Transverse colon (tissue), 4 donors: ENCODE measurements at regions of chr2 and their contacts with region 1.

Region 1: GRCh38 chr2:131413148-131413747 is 49.3 kb upstream of the RAB6D start:
- DNase-seq: no peak
- H3K4me3 ChIP-seq: no peak overlapping the region
- H3K27ac ChIP-seq: no peak overlapping the region
- H3K4me1 ChIP-seq: no peaks in the 10 kb centered on the region
- H3K27me3 ChIP-seq: peaks cover 32% of the 10 kb centered on the region
- CTCF ChIP-seq: peak; percentile 70 to 80 (median 75)
- EP300 ChIP-seq: no peak
- POLR2A ChIP-seq: no peak

Region 2: DNA sequence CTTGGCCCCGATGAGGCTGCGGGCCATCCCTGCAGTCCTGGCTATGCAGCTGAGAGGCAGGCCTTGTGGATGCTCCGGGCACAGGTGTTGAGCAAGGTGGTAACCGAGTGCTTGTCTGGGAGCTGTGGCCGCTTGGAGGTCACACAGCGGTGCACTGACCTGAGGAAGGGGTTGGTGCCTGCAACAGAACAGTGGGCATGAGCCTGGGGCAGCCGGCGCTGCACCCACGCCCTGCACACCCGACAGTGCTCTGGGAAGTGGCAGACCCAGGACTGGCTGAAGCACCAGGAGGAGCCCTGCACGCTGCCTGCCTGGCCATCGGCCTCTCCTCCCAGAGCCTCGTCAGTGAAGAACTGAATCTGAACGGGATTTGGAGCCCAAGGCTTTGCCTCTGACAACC is 212.2 kb before region 1 on chr2:
- in situ Hi-C with region 1: no loop called
- intact Hi-C with region 1: no loop called
- DNase-seq: no peak
- H3K4me3 ChIP-seq: no peak overlapping the region
- H3K27ac ChIP-seq: no peak overlapping the region
- H3K4me1 ChIP-seq: no peaks in the 10 kb centered on the region
- H3K27me3 ChIP-seq: no peaks in the 10 kb centered on the region
- CTCF ChIP-seq: no peak
- EP300 ChIP-seq: no peak
- POLR2A ChIP-seq: no peak

Region 3: GRCh38 chr2:131349021-131349420 is 64.2 kb before region 1 on chr2:
- in situ Hi-C with region 1: no loop called
- intact Hi-C with region 1: no loop called
- DNase-seq: no peak
- H3K4me3 ChIP-seq: no peak overlapping the region
- H3K27ac ChIP-seq: no peak overlapping the region
- H3K4me1 ChIP-seq: no peaks in the 10 kb centered on the region
- H3K27me3 ChIP-seq: no peaks in the 10 kb centered on the region
- CTCF ChIP-seq: no peak
- EP300 ChIP-seq: no peak
- POLR2A ChIP-seq: no peak

Region 4: DNA sequence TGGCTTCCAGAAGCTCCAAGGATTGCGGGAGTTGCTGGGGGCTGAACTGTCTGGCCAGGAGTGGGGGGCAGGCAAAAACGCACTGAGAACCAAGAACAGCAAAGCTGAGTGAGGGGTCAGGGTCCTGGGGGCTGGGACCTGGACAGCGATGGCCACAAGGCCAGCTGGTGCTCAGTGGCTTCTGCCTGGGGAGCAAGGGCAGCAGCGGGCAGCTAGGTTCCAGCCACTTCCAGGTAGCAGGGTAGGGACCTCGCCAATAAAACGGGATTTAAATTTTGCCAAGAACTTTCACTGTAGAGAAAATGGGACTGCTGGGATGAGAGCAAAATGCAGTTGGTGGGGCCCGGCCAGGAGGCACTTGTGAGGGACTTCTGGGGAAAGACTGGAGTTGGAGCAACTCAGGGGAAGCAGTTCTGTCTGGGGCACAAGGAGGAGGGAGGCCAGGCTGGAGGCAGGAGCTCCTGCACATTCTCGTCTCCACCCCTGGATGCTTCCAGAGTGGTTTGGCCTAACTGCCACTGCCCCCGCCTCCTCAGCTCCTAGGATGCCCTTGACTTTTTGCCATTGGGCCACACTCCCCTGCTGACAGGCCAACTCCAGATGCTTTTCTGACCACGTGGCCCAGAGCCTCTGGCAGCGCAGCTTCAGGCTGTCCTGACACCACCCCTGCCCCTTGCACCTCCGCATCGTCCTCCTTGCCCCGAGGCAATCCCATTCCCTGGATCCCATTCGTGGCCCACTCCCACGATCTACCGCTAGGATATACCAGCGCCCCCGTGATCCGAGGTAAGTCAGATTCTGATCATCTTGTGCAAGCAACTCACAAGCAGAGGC is 108.9 kb after region 1 on chr2:
- in situ Hi-C with region 1: no loop called
- intact Hi-C with region 1: loop called (anchors 10 kb)
- DNase-seq: no peak
- H3K4me3 ChIP-seq: no peak overlapping the region
- H3K27ac ChIP-seq: no peak overlapping the region
- H3K4me1 ChIP-seq: peaks cover 0 to 2% (median 1%) of the 10 kb centered on the region in 4 donors
- H3K27me3 ChIP-seq: no peaks in the 10 kb centered on the region
- CTCF ChIP-seq: no peak
- EP300 ChIP-seq: no peak
- POLR2A ChIP-seq: no peak

Region 5: GRCh38 chr2:131673392-131674173 is 260.3 kb after region 1 on chr2:
- in situ Hi-C with region 1: loop called in 2 of 4 experiments (anchors 25 kb)
- intact Hi-C with region 1: no loop called
- DNase-seq: peak; percentile 84
- H3K4me3 ChIP-seq: peak overlapping the region in 2 of 4 donors; percentile 31 to 39
- H3K27ac ChIP-seq: no peak overlapping the region
- H3K4me1 ChIP-seq: peaks cover 11 to 24% (median 20%) of the 10 kb centered on the region in 4 donors
- H3K27me3 ChIP-seq: peaks cover 49% of the 10 kb centered on the region
- CTCF ChIP-seq: peak; percentile 80 to 90 (median 88)
- EP300 ChIP-seq: no peak
- POLR2A ChIP-seq: no peak